ENCODE measurements at regions of chr5 and their contacts with region 1.

Region 1: GRCh38 chr5:136374003-136374402 is 8.7 kb upstream of the TRPC7 start:
- DNase-seq: peak; percentile 71
- H3K4me3 ChIP-seq: no peak overlapping the region
- H3K27ac ChIP-seq: no peak overlapping the region
- H3K4me1 ChIP-seq: peaks cover 3% of the 10 kb centered on the region
- H3K27me3 ChIP-seq: no peaks in the 10 kb centered on the region
- CTCF ChIP-seq: peak; percentile 72 to 78

Region 2: DNA sequence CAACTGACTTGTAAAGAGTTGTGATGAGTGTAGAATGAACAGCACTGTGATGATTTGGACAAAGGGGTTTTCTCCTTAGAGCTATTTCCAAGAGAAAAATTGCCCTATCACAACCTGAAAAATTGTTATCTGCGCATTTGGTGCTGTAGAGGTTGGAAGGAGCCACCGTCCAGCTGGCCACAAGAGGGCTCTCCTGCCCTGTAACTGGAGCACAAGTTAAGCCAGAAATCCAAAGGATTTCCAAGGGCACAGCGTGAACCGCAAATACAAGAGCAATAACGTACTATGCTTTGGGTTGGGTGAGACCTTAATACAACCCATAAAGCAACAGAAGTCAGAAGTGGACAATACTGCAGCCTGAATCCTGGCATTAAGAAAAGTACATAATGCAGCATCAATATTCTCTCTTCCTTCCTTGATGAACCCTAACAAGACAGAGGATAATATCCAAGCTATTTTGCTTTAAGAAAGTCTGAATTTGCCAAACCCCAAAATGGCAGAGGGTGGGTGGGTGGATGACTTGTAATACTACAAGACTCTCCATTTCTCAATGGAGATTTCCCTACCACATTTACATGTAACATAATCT is 124.2 kb before region 1 on chr5:
- CTCF ChIA-PET with region 1: no interaction called
- dilution Hi-C with region 1: no loop called
- in situ Hi-C with region 1: no loop called
- intact Hi-C with region 1: loop called (anchors 5 kb)
- DNase-seq: peak; percentile 37
- H3K4me3 ChIP-seq: no peak overlapping the region
- H3K27ac ChIP-seq: no peak overlapping the region
- H3K4me1 ChIP-seq: peaks cover 10% of the 10 kb centered on the region
- H3K27me3 ChIP-seq: no peaks in the 10 kb centered on the region
- CTCF ChIP-seq: peak; percentile 97 to 98

Region 3: GRCh38 chr5:136418301-136418700 is 44.3 kb after region 1 on chr5:
- CTCF ChIA-PET with region 1: no interaction called
- dilution Hi-C with region 1: loop called (anchors 5 kb)
- in situ Hi-C with region 1: no loop called
- intact Hi-C with region 1: no loop called
- DNase-seq: no peak
- H3K4me3 ChIP-seq: no peak overlapping the region
- H3K27ac ChIP-seq: no peak overlapping the region
- H3K4me1 ChIP-seq: no peaks in the 10 kb centered on the region
- H3K27me3 ChIP-seq: no peaks in the 10 kb centered on the region
- CTCF ChIP-seq: no peak

Region 4: DNA sequence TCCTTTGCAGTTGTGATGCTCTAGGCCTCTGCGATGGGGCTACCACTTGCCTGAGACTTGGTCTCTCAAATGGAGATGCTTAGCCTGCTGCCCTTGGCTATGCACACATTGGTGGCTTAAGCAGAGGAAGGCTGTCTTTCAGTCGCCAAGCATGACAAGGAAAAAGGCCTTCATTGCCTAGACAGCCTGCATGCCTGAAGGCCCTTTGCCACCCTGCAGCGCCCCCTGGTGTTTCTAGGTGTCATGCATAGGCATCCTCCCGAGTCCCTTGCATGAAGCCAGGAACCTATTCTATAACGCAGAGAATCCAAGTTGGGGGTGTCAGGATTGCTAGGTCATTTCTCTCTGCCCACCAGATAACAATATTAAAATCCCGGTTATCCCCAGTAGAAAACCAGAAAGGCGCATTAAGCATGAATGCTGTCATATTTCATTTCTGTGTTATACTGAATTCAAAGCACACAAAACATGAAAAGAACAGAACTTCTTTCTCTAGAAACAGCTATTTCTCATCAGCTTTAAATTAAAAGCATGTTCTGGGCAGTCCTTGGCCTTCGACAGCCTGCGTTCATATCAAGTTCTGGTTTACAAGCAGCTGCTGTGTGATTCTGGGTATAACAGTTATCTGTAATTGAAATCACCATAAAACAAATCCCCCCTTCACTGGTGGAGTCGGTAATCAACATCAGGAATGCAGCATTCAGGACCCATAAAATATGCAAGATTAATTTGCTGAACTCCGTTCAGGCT is 51.0 kb after region 1 on chr5:
- CTCF ChIA-PET with region 1: no interaction called
- dilution Hi-C with region 1: no loop called
- in situ Hi-C with region 1: no loop called
- intact Hi-C with region 1: loop called (anchors 1 kb)
- DNase-seq: peak; percentile 31
- H3K4me3 ChIP-seq: no peak overlapping the region
- H3K27ac ChIP-seq: no peak overlapping the region
- H3K4me1 ChIP-seq: no peaks in the 10 kb centered on the region
- H3K27me3 ChIP-seq: no peaks in the 10 kb centered on the region
- CTCF ChIP-seq: peak; percentile 90 to 93

Region 5: GRCh38 chr5:136516637-136517036 is 142.6 kb after region 1 on chr5:
- CTCF ChIA-PET with region 1: no interaction called
- dilution Hi-C with region 1: no loop called
- in situ Hi-C with region 1: no loop called
- intact Hi-C with region 1: no loop called
- DNase-seq: no peak
- H3K4me3 ChIP-seq: no peak overlapping the region
- H3K27ac ChIP-seq: no peak overlapping the region
- H3K4me1 ChIP-seq: no peaks in the 10 kb centered on the region
- H3K27me3 ChIP-seq: peaks cover 7% of the 10 kb centered on the region
- CTCF ChIP-seq: no peak

Region 6: GRCh38 chr5:136686192-136686872 is 312.3 kb after region 1 on chr5:
- CTCF ChIA-PET with region 1: no interaction called
- dilution Hi-C with region 1: no loop called
- in situ Hi-C with region 1: loop called in 1 of 2 experiments (anchors 25 kb)
- intact Hi-C with region 1: loop called (anchors 1 kb)
- DNase-seq: peak; percentile 56
- H3K4me3 ChIP-seq: no peak overlapping the region
- H3K27ac ChIP-seq: no peak overlapping the region
- H3K4me1 ChIP-seq: no peaks in the 10 kb centered on the region
- H3K27me3 ChIP-seq: no peaks in the 10 kb centered on the region
- CTCF ChIP-seq: peak; percentile 62 to 71

Region 7: DNA sequence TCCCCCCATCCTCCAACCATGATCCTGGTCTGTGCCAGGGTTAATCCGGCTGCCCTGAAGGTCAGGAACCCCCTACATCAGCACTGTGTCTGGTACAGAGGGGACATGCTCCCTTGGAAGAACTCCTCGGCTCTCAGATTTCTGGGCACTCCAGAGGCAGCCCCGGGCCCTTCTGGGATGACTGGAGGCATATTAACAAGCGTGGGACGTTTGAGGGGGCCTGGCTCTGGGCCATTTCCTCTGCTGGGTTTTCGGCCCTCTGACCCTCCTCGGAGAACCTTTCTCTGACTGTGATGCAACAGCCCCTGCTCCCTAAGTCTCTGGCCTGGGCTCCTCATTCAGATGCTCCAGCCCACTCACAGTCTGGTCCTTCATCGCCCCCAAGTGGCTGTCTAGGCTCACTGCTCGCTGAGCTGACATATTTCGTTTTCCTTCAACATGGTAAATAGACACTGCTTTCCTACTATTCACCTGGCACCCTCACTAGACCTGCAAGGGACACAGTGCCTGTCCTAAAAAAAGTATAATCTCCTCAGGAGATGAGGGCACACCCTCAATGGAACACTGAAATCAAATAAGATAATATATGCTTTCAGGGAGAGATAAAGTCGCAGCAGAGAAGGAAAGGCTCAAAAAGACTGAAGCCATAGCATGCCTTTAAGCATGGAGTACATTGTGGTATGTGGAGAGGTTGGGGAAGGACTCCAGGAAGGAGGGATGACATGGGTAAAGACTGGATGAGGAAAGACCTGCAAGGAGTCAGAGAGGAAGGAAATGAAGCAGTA is 396.1 kb after region 1 on chr5:
- CTCF ChIA-PET with region 1: no interaction called
- dilution Hi-C with region 1: no loop called
- in situ Hi-C with region 1: loop called (anchors 10 to 25 kb)
- intact Hi-C with region 1: loop called (anchors 1 kb)
- DNase-seq: peak; percentile 45
- H3K4me3 ChIP-seq: no peak overlapping the region
- H3K27ac ChIP-seq: no peak overlapping the region
- H3K4me1 ChIP-seq: no peaks in the 10 kb centered on the region
- H3K27me3 ChIP-seq: peaks cover 2% of the 10 kb centered on the region
- CTCF ChIP-seq: peak; percentile 93 to 95